ENCODE measurements at regions of chr17 and their contacts with region 1.

Region 1: GRCh38 chr17:67824735-67825626 is at the start of gene BPTF:
- DNase-seq: peak; percentile 87
- ATAC-seq: peak; percentile 91
- H3K4me3 ChIP-seq: peak within 1 kb of the TSS; percentile 62 to 78
- H3K27ac ChIP-seq: peak within 1 kb of the TSS; percentile 74
- H3K4me1 ChIP-seq: peaks cover 16 to 19% of the 10 kb centered on the region in 2 experiments
- H3K27me3 ChIP-seq: no peaks in the 10 kb centered on the region
- CTCF ChIP-seq: peak; percentile 67 to 93 (median 90)
- POLR2A ChIP-seq: peak; percentile 56
- RAD21 ChIP-seq: peak; percentile 58
- total RNA-seq, gene BPTF: 114 TPM

Region 2: GRCh38 chr17:67717624-67718329 is 107.2 kb before region 1 on chr17 and contains the start of gene NOL11:
- CTCF ChIA-PET with region 1: no interaction called
- POLR2A ChIA-PET with region 1: no interaction called
- RAD21 ChIA-PET with region 1: no interaction called
- intact Hi-C with region 1: loop called (anchors 2 kb)
- DNase-seq: peak; percentile 99
- ATAC-seq: peak; percentile 98
- H3K4me3 ChIP-seq: peak within 1 kb of the TSS; percentile 83 to 94
- H3K27ac ChIP-seq: peak within 1 kb of the TSS; percentile 77
- H3K4me1 ChIP-seq: peaks cover 7 to 16% of the 10 kb centered on the region in 2 experiments; a peak in 3 of 4 replicates
- H3K27me3 ChIP-seq: no peaks in the 10 kb centered on the region
- CTCF ChIP-seq: peak; percentile 92 to 99 (median 96)
- POLR2A ChIP-seq: peak; percentile 95
- RAD21 ChIP-seq: peak; percentile 83
- total RNA-seq, gene NOL11: 118 TPM

Region 3: GRCh38 chr17:67800495-67800928 is 24.5 kb before region 1 on chr17:
- CTCF ChIA-PET with region 1: interaction called, 6 read pairs
- POLR2A ChIA-PET with region 1: interaction called, 5 read pairs
- RAD21 ChIA-PET with region 1: no interaction called
- intact Hi-C with region 1: loop called (anchors 2 kb)
- DNase-seq: peak; percentile 83
- ATAC-seq: peak; percentile 98
- H3K4me3 ChIP-seq: no peak overlapping the region
- H3K27ac ChIP-seq: no peak overlapping the region
- H3K4me1 ChIP-seq: no peaks in the 10 kb centered on the region
- H3K27me3 ChIP-seq: no peaks in the 10 kb centered on the region
- CTCF ChIP-seq: peak; percentile 90 to 96 (median 91)
- POLR2A ChIP-seq: no peak
- RAD21 ChIP-seq: peak; percentile 94

Measured in HCT116 (cell line).